ENCODE measurements at regions of chr2 and their contacts with region 1.

Region 1: DNA sequence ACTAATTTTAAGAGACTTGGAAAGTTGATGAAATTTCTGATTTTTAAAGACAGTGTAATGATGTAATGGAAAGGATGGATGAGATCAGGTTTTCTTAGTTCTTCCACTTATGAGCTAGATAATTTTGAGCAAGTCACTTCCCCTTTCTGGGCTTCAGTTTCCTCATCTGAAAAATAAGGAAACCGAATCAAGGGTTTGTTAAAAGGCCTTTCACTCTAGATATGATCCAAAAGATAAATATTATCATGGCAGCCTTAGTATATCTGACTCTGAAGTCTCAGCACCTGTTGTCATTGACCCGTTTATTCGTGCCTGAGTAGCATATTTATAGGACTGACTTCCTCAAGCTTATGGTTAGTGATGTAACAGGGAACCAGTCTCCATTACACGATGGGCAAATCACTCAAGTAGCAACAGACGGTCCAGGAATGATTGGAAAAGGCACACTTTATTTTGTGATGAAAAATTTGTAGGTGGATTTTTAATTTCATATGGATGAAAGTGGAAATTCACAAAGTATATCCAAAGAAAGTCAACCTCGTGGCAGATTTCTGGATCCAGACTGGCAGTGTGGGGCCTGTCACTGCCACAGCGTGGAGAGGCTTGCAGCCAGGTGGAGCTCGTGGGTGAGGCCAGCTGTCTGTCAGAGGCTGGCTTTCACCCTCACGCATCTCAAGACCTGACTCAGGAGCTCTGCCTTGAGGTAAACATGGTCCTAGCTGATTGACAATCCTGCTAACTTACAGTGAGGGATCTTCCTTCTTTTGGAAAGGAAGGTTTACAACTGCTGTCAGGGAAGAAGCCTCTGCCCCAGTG is 137.9 kb upstream of the CXCR4 start:
- DNase-seq: no peak
- ATAC-seq: peak; percentile 63
- H3K4me3 Mint-ChIP-seq: peak overlapping the region; percentile 55
- H3K27ac Mint-ChIP-seq: peak overlapping the region; percentile 92
- H3K4me1 Mint-ChIP-seq: peaks cover 86% of the 10 kb centered on the region
- H3K27me3 Mint-ChIP-seq: no peaks in the 10 kb centered on the region
- CTCF ChIP-seq: no peak

Region 2: GRCh38 chr2:135997380-135997779 is 258.5 kb before region 1 on chr2:
- CTCF ChIA-PET with region 1: interaction called, 24 read pairs
- POLR2A ChIA-PET with region 1: interaction called, 10 read pairs
- intact Hi-C with region 1: loop called (anchors 2 kb)
- DNase-seq: peak; percentile 41
- ATAC-seq: peak; percentile 97
- H3K4me3 Mint-ChIP-seq: peak overlapping the region; percentile 24
- H3K27ac Mint-ChIP-seq: peak overlapping the region; percentile 86
- H3K4me1 Mint-ChIP-seq: peaks cover 51% of the 10 kb centered on the region
- H3K27me3 Mint-ChIP-seq: no peaks in the 10 kb centered on the region
- CTCF ChIP-seq: no peak

Region 3: DNA sequence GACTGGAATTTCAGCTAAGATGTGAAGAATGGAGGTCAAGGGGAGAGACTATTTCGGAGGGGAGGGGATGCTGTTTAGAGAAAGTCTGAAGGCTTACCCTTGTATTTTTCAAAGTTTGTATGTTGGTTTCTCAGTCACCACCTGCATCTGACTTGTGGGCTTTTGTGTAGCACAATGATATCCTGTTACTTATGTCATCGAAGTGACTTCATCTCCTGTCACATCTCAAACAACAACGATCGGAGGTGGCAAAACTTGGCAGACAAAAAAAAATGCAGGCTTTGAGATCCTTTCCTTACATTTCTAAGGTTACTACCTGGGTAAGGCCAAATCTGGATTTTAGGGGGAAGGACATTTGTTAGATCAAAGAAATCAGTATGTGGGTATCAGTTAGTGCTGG is 126.3 kb before region 1 on chr2:
- CTCF ChIA-PET with region 1: interaction called, 17 read pairs
- POLR2A ChIA-PET with region 1: interaction called, 111 read pairs
- intact Hi-C with region 1: loop called (anchors 1 kb)
- DNase-seq: no peak
- ATAC-seq: no peak
- H3K4me3 Mint-ChIP-seq: peak overlapping the region; percentile 73
- H3K27ac Mint-ChIP-seq: peak overlapping the region; percentile 99
- H3K4me1 Mint-ChIP-seq: peaks cover 99% of the 10 kb centered on the region
- H3K27me3 Mint-ChIP-seq: no peaks in the 10 kb centered on the region
- CTCF ChIP-seq: no peak

Region 4: DNA sequence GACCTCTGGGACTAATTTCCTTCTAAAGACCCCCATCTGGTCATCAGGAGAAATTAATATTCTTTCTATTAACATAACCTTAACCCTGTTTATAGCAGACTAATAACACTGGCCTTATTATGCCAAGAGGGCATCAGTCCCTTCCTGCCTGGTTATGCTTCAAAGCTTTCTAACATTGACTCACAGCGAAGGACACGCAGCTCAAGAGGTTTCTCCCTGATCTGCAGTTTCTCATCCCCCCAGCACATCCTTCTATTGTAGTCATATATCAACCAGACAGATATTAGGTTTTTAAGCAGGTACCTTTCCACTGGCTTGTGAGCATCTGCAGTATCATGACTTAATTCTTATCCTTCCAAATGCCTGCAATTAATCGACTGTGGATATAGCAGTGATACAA is 37.9 kb before region 1 on chr2:
- CTCF ChIA-PET with region 1: interaction called, 4 read pairs
- POLR2A ChIA-PET with region 1: interaction called, 40 read pairs
- intact Hi-C with region 1: loop called (anchors 1 kb)
- DNase-seq: no peak
- ATAC-seq: peak; percentile 59
- H3K4me3 Mint-ChIP-seq: no peak overlapping the region
- H3K27ac Mint-ChIP-seq: peak overlapping the region; percentile 75
- H3K4me1 Mint-ChIP-seq: peaks cover 96% of the 10 kb centered on the region
- H3K27me3 Mint-ChIP-seq: no peaks in the 10 kb centered on the region
- CTCF ChIP-seq: no peak

Region 5: GRCh38 chr2:136310005-136310495 is 54.2 kb after region 1 on chr2:
- CTCF ChIA-PET with region 1: interaction called, 3 read pairs
- POLR2A ChIA-PET with region 1: interaction called, 7 read pairs
- intact Hi-C with region 1: loop called (anchors 2 kb)
- DNase-seq: no peak
- ATAC-seq: peak; percentile 16
- H3K4me3 Mint-ChIP-seq: peak overlapping the region; percentile 1
- H3K27ac Mint-ChIP-seq: peak overlapping the region; percentile 4
- H3K4me1 Mint-ChIP-seq: peaks cover 30% of the 10 kb centered on the region
- H3K27me3 Mint-ChIP-seq: no peaks in the 10 kb centered on the region
- CTCF ChIP-seq: no peak

Region 6: DNA sequence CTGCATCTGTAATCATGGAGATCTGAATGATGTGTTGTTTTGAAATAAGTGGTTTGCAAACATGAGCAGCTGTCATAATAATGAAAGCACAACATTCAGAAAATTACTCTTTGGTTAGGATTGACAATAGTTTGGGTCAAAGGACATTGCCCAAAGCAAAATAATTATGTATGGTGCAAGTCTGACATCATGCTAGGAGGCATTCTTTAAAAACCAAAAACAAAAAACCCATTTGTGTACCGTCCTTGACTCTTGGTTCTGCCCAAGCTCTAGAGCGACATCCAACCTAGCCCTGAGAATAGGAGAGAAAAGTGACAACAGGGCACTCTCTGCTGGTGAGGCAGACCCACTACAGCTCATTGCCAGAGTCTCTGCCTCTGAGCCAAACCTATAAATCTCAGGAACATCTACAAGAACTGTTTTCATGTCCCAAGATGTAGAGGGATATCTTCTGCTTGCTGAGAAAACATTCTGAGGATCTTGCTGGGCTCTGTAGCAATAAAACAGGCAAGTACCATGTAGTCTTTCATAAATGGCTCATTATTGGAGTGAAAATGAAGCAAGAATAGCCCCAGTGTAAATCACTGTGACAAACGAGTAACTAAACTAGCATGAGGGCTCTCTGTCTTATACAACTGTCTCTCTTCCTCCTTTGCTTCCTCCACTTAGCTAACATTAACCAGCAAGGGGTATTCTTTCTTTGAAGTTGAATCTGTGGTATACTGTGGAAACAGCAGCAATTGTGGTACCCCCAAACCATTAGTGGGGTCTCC is 128.9 kb after region 1 on chr2:
- CTCF ChIA-PET with region 1: interaction called, 30 read pairs
- POLR2A ChIA-PET with region 1: interaction called, 45 read pairs
- intact Hi-C with region 1: loop called (anchors 1 kb)
- DNase-seq: no peak
- ATAC-seq: peak; percentile 67
- H3K4me3 Mint-ChIP-seq: peak overlapping the region; percentile 33
- H3K27ac Mint-ChIP-seq: peak overlapping the region; percentile 94
- H3K4me1 Mint-ChIP-seq: peaks cover 50% of the 10 kb centered on the region
- H3K27me3 Mint-ChIP-seq: no peaks in the 10 kb centered on the region
- CTCF ChIP-seq: peak; percentile 38

Region 7: GRCh38 chr2:136539355-136539754 is 283.5 kb after region 1 on chr2:
- CTCF ChIA-PET with region 1: no interaction called
- POLR2A ChIA-PET with region 1: no interaction called
- intact Hi-C with region 1: no loop called
- DNase-seq: no peak
- ATAC-seq: no peak
- H3K4me3 Mint-ChIP-seq: no peak overlapping the region
- H3K27ac Mint-ChIP-seq: no peak overlapping the region
- H3K4me1 Mint-ChIP-seq: no peaks in the 10 kb centered on the region
- H3K27me3 Mint-ChIP-seq: peaks cover 3% of the 10 kb centered on the region
- CTCF ChIP-seq: no peak